BJ (cell line): ENCODE measurements at regions of chr17 and their contacts with region 1.

Region 1: DNA sequence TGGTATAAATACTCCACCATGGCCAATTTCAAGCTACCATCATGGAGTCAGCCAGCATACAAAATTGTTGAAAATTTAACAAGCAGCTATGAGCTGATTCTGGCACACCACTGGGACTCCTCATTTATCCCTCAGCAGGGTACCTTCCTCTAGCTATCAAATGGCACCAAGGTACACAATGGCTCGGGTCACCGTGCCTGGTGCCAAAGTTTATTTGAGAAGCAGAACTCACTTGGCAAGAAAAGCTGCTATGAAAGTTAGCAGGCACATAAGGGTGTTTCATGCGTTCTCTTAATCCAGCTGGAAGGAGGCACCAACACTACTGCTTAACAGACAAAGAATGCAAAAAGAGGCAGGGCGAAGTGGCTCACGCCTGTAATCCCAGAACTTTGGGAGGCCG is 51.6 kb downstream of the IKZF3 start:
- DNase-seq: no peak
- H3K4me3 ChIP-seq: no peak overlapping the region
- H3K27me3 ChIP-seq: peaks cover 16% of the 10 kb centered on the region
- CTCF ChIP-seq: no peak

Region 2: DNA sequence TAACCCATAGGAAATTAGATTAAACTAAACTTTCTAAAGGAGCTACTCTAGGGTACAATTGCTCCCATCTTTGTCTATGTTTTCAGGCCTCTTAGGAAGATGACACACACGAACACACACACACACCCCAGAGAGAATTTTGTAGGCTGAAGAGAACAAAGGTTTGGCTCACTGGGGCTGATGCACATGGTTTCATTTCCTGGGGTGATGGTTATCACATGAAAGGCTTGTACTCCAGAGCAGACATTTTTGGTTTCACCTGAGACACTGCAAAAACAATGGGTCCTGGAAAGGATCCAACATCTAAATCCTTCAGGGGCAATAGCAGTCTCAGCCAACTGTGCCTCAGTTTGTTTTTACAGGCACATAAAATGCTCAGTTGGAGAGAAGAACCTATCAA is 11.9 kb before region 1 on chr17:
- CTCF ChIA-PET with region 1: no interaction called
- POLR2A ChIA-PET with region 1: interaction called, 18 read pairs
- DNase-seq: no peak
- H3K4me3 ChIP-seq: no peak overlapping the region
- H3K27me3 ChIP-seq: peaks cover 2% of the 10 kb centered on the region; the same call in 1 of the 2 replicates
- CTCF ChIP-seq: no peak

Region 3: DNA sequence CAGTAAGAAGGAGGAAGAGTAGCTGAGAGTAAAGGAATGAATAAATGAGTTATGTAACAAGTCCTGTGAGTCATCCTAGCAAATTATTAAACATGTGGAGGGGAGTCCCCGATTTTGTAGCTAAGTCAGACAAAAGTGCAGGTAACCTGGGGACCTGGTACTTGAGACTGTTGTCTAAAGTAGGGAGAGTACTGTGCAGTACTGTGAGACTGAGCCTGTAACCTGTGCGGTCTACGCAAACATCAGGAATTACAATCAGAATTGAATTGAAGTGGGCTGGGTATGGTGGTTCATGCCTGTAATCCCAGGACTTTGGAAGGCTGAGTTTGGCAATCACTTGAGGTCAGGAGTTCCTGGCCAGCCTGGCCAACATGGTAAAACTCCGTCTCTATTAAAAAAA is 16.0 kb after region 1 on chr17:
- CTCF ChIA-PET with region 1: no interaction called
- POLR2A ChIA-PET with region 1: no interaction called
- DNase-seq: no peak
- H3K4me3 ChIP-seq: no peak overlapping the region
- H3K27me3 ChIP-seq: peaks cover 5% of the 10 kb centered on the region; the same call in 1 of the 2 replicates
- CTCF ChIP-seq: no peak

Region 4: DNA sequence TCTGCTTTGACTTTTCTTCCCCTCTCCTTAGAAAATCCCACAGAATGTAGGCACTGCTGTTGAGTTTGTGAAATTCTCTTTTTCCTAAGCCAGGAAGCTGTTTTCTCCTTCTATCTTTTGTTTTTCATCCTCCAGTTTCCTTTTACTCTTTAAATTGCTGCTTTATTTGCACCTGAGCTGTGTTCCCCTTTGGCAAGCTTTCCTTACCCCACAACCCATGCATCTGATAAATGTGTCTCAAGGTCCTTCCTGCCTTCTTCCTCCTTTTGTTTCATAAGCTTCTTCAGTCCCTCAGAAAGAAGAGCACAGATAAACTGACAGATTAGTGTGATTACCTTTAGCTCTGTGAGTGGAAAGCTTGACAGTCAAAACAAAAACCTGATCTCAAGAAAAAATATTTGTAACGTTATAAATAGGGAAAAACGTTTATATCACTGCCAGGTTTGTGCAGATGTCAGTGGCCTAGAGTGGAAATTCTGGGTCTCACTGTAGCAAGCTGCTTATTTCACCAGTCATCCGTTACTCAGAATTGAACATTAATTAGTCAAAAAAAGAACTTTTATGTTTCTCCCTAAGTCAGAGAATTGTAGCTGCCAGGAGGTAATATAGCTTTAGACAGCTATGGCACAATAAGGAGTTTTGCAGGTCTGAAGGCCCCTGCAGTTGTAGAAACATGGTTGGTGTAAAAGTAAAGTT is 82.4 kb after region 1 on chr17:
- CTCF ChIA-PET with region 1: no interaction called
- POLR2A ChIA-PET with region 1: no interaction called
- DNase-seq: no peak
- H3K4me3 ChIP-seq: no peak overlapping the region
- H3K27me3 ChIP-seq: peaks cover 4% of the 10 kb centered on the region
- CTCF ChIP-seq: no peak

Region 5: DNA sequence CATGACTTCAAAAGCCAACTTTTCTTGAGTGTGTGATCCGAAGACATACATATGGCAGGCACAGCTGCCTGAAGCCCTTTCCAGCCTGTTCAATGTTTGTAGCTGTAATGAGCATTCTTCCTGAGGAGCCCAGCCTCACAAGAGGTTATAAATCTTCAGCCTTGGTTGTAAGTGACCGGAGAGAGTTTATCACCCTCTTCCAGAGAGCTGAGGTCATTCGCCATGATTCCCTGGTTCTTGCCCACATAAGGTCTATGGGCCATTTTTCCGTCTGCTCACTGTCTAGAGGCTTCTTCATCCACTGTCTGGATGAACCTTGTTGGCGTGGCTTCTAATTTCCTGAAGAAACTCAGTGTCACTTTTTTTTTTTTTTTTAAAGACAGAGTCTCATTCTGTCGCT is 193.1 kb after region 1 on chr17:
- CTCF ChIA-PET with region 1: no interaction called
- POLR2A ChIA-PET with region 1: no interaction called
- DNase-seq: no peak
- H3K4me3 ChIP-seq: no peak overlapping the region
- H3K27me3 ChIP-seq: no peaks in the 10 kb centered on the region
- CTCF ChIP-seq: no peak